Endothelial cell of umbilical vein (primary cell): ENCODE measurements at regions of chr11 and their contacts with region 1.

Region 1: GRCh38 chr11:62449451-62449851 is 30.6 kb downstream of the SCGB1A1 start:
- DNase-seq: no peak
- H3K4me3 ChIP-seq: no peak overlapping the region
- H3K27ac ChIP-seq: no peak overlapping the region
- H3K4me1 ChIP-seq: no peaks in the 10 kb centered on the region
- H3K27me3 ChIP-seq: no peaks in the 10 kb centered on the region
- CTCF ChIP-seq: no peak
- POLR2A ChIP-seq: no peak

Region 2: GRCh38 chr11:62461740-62462507 is 12.5 kb after region 1 on chr11:
- CTCF ChIA-PET with region 1: interaction called, 11 read pairs
- POLR2A ChIA-PET with region 1: interaction called, 3 read pairs
- dilution Hi-C with region 1: no loop called
- intact Hi-C with region 1: no loop called
- DNase-seq: no peak
- H3K4me3 ChIP-seq: no peak overlapping the region
- H3K27ac ChIP-seq: no peak overlapping the region
- H3K4me1 ChIP-seq: no peaks in the 10 kb centered on the region
- H3K27me3 ChIP-seq: no peaks in the 10 kb centered on the region
- CTCF ChIP-seq: no peak
- POLR2A ChIP-seq: no peak